ENCODE measurements at regions of chr18 and their contacts with region 1.

Region 1: GRCh38 chr18:72762515-72763122 is 105.2 kb downstream of the NETO1 start:
- DNase-seq: peak; percentile 6
- ATAC-seq: no peak
- H3K4me3 ChIP-seq: no peak overlapping the region
- H3K27ac ChIP-seq: no peak overlapping the region
- H3K4me1 ChIP-seq: no peaks in the 10 kb centered on the region
- H3K27me3 ChIP-seq: no peaks in the 10 kb centered on the region
- CTCF ChIP-seq: peak; percentile 30 to 73 (median 41); a peak in 5 of 6 replicates
- POLR2A ChIP-seq: no peak
- RAD21 ChIP-seq: peak; percentile 50; the same call in 1 of the 2 replicates

Region 2: GRCh38 chr18:73842795-73843394 is 1080.3 kb after region 1 on chr18:
- CTCF ChIA-PET with region 1: interaction called, 3 read pairs
- POLR2A ChIA-PET with region 1: no interaction called
- RAD21 ChIA-PET with region 1: no interaction called
- intact Hi-C with region 1: loop called (anchors 2 kb)
- DNase-seq: peak; percentile 4
- ATAC-seq: no peak
- H3K4me3 ChIP-seq: no peak overlapping the region
- H3K27ac ChIP-seq: no peak overlapping the region
- H3K4me1 ChIP-seq: no peaks in the 10 kb centered on the region
- H3K27me3 ChIP-seq: no peaks in the 10 kb centered on the region
- CTCF ChIP-seq: peak; percentile 6 to 82 (median 74); a peak in 4 of 6 replicates
- POLR2A ChIP-seq: no peak
- RAD21 ChIP-seq: peak; percentile 27; the same call in 1 of the 2 replicates

Region 3: GRCh38 chr18:73980289-73980979 is 1217.8 kb after region 1 on chr18:
- CTCF ChIA-PET with region 1: no interaction called
- POLR2A ChIA-PET with region 1: no interaction called
- RAD21 ChIA-PET with region 1: no interaction called
- intact Hi-C with region 1: loop called (anchors 5 kb)
- DNase-seq: peak; percentile 4
- ATAC-seq: peak; percentile 65; the same call in 1 of the 2 replicates
- H3K4me3 ChIP-seq: no peak overlapping the region
- H3K27ac ChIP-seq: no peak overlapping the region
- H3K4me1 ChIP-seq: no peaks in the 10 kb centered on the region
- H3K27me3 ChIP-seq: no peaks in the 10 kb centered on the region
- CTCF ChIP-seq: peak in 2 of 3 experiments; percentile 56 to 59; a peak in 4 of 6 replicates
- POLR2A ChIP-seq: no peak
- RAD21 ChIP-seq: no peak; the same call in 1 of the 2 replicates

Region 4: DNA sequence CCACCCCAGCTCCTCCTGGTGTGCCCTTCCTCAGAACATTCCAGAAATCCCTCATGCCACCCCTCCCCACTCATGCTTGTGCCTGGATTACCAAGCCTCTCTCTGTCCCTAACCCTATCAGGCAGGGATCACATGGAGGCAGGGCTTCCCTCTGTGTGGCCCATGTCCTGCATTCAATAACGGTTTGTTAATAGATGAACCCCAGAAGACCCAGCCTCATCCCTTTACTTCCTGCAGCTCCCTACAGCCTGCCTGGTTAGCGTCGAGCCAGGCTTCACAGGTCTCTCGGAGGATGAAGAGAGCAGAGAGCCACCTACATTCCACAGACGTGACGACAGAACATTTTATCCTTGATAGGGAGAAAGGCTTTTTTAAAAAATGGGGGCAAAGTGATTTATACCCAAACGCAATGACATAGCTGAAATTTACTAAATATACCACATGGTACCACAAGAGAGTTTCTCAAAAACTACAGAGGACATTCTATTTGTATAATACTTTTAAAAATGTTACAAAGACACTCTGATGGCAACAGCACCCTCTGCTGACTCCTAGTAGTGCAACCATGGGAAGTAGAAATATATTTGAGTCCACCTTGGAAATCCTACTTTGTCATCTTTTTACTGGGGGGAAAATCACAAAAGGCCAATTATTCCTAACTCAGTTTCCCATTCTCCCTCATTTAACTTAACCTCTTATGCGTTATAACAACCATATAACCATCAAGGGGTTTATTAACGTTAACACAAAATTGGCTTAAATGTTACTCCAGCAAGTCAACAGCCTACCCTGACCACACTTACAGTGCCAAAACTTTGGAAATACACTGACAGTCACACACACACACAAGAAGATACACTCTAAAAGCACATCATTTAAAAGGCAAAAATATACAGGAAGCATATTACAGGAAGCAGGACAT is 1354.3 kb after region 1 on chr18:
- CTCF ChIA-PET with region 1: no interaction called
- POLR2A ChIA-PET with region 1: no interaction called
- RAD21 ChIA-PET with region 1: no interaction called
- intact Hi-C with region 1: loop called (anchors 2 kb)
- DNase-seq: peak; percentile 8
- ATAC-seq: peak; percentile 75
- H3K4me3 ChIP-seq: no peak overlapping the region
- H3K27ac ChIP-seq: no peak overlapping the region
- H3K4me1 ChIP-seq: no peaks in the 10 kb centered on the region
- H3K27me3 ChIP-seq: peaks cover 18% of the 10 kb centered on the region
- CTCF ChIP-seq: peak; percentile 47 to 77 (median 60); a peak in 5 of 6 replicates
- POLR2A ChIP-seq: no peak
- RAD21 ChIP-seq: peak; percentile 54

Measured in HCT116 (cell line).